H1 (cell line): ENCODE measurements at regions of chr13 and their contacts with region 1.

Region 1: GRCh38 chr13:28636674-28637317 is 22.1 kb upstream of the POMP start:
- DNase-seq: peak; percentile 54 to 63
- H3K4me3 ChIP-seq: no peak overlapping the region
- H3K27ac ChIP-seq: no peak overlapping the region
- H3K4me1 ChIP-seq: peaks cover 0 to 3% (median 1%) of the 10 kb centered on the region in 4 experiments; a peak in 3 of 7 replicates
- H3K27me3 ChIP-seq: no peaks in the 10 kb centered on the region
- CTCF ChIP-seq: peak; percentile 70 to 90 (median 85)
- EP300 ChIP-seq: no peak
- POLR2A ChIP-seq: no peak
- RAD21 ChIP-seq: peak; percentile 94 to 98

Region 2: GRCh38 chr13:28548872-28549271 is 87.9 kb before region 1 on chr13:
- CTCF ChIA-PET with region 1: interaction called, 10 read pairs
- POLR2A ChIA-PET with region 1: no interaction called
- DNase-seq: no peak
- H3K4me3 ChIP-seq: no peak overlapping the region
- H3K27ac ChIP-seq: no peak overlapping the region
- H3K4me1 ChIP-seq: peaks cover 0 to 2% (median 0%) of the 10 kb centered on the region in 4 experiments; a peak in 1 of 7 replicates
- H3K27me3 ChIP-seq: no peaks in the 10 kb centered on the region; a peak in 1 of 7 replicates
- CTCF ChIP-seq: peak; percentile 51 to 68 (median 63)
- EP300 ChIP-seq: no peak
- POLR2A ChIP-seq: no peak
- RAD21 ChIP-seq: peak; percentile 83 to 88